CD4-positive, alpha-beta memory T cell (primary cell): ENCODE measurements at regions of chr1 and their contacts with region 1.

Region 1: GRCh38 chr1:109790735-109791494 is 27.2 kb upstream of the EPS8L3 start:
- DNase-seq: peak; percentile 72 to 87 (median 76)
- H3K4me3 ChIP-seq: no peak overlapping the region
- H3K4me3 Mint-ChIP-seq: peak overlapping the region in 7 of 8 donors; percentile 35 to 82 (median 55)
- H3K27ac ChIP-seq: peak overlapping the region; percentile 39
- H3K27ac Mint-ChIP-seq: peak overlapping the region; percentile 82 to 95 (median 92)
- H3K4me1 ChIP-seq: peaks cover 81% of the 10 kb centered on the region
- H3K4me1 Mint-ChIP-seq: peaks cover 43 to 91% (median 73%) of the 10 kb centered on the region in 4 donors
- H3K27me3 ChIP-seq: no peaks in the 10 kb centered on the region
- H3K27me3 Mint-ChIP-seq: no peaks in the 10 kb centered on the region

Region 2: DNA sequence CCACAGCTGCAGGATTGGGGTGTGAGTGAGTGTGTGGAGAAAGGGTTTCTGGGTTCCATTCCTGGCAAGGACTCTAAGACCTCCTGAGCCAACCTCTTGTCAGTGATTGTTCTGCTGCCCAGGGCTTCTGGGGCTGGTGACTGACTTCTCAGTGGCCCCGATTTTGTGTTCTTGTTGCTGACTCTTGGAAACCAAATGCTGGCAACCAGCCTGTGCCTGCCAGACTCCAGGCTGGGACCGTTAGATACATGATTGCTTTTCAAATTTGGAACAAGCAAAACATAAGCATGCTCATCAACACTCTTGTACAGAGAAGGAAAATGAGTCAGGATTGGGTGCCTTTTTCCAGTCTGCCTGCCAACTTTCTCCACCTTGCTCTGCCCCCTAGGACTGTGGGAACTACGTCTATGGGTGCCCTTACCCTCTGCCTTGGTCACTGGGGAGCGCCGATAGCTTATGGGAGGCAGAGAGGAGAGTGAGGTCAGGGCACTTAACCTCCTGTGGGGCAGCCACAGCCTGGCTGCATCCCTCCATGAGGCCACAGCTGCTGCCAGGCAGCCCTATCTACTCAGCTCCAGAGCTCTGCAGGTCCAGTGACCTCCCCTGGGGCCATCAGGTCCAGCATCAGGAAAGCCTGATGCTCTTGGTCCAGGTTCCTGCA is 12.1 kb after region 1 on chr1:
- CTCF ChIA-PET with region 1: interaction called, 136 read pairs
- POLR2A ChIA-PET with region 1: interaction called, 91 read pairs
- intact Hi-C with region 1: loop called (anchors 1 kb)
- DNase-seq: peak in 1 of 5 donors; percentile 48
- H3K4me3 ChIP-seq: peak overlapping the region; percentile 18 to 26
- H3K4me3 Mint-ChIP-seq: peak overlapping the region; percentile 59 to 84 (median 80)
- H3K27ac ChIP-seq: peak overlapping the region; percentile 62
- H3K27ac Mint-ChIP-seq: peak overlapping the region; percentile 89 to 98 (median 93)
- H3K4me1 ChIP-seq: peaks cover 88% of the 10 kb centered on the region
- H3K4me1 Mint-ChIP-seq: peaks cover 53 to 91% (median 73%) of the 10 kb centered on the region in 4 donors
- H3K27me3 ChIP-seq: no peaks in the 10 kb centered on the region
- H3K27me3 Mint-ChIP-seq: no peaks in the 10 kb centered on the region

Region 3: GRCh38 chr1:109814223-109814622 is 23.3 kb after region 1 on chr1:
- CTCF ChIA-PET with region 1: interaction called, 12 read pairs
- POLR2A ChIA-PET with region 1: interaction called, 3 read pairs
- intact Hi-C with region 1: no loop called
- DNase-seq: no peak
- H3K4me3 ChIP-seq: no peak overlapping the region
- H3K4me3 Mint-ChIP-seq: no peak overlapping the region
- H3K27ac ChIP-seq: no peak overlapping the region
- H3K27ac Mint-ChIP-seq: no peak overlapping the region
- H3K4me1 ChIP-seq: no peaks in the 10 kb centered on the region
- H3K4me1 Mint-ChIP-seq: peaks cover 0 to 4% (median 3%) of the 10 kb centered on the region in 4 donors
- H3K27me3 ChIP-seq: no peaks in the 10 kb centered on the region
- H3K27me3 Mint-ChIP-seq: no peaks in the 10 kb centered on the region

Region 4: GRCh38 chr1:109901524-109902145 is 110.7 kb after region 1 on chr1:
- CTCF ChIA-PET with region 1: interaction called, 17 read pairs
- POLR2A ChIA-PET with region 1: interaction called, 48 read pairs
- intact Hi-C with region 1: no loop called
- DNase-seq: no peak
- H3K4me3 ChIP-seq: no peak overlapping the region
- H3K4me3 Mint-ChIP-seq: no peak overlapping the region
- H3K27ac ChIP-seq: no peak overlapping the region
- H3K27ac Mint-ChIP-seq: peak overlapping the region in 1 of 7 donors; percentile 17
- H3K4me1 ChIP-seq: peaks cover 14% of the 10 kb centered on the region
- H3K4me1 Mint-ChIP-seq: peaks cover 12 to 19% (median 14%) of the 10 kb centered on the region in 4 donors
- H3K27me3 ChIP-seq: no peaks in the 10 kb centered on the region
- H3K27me3 Mint-ChIP-seq: no peaks in the 10 kb centered on the region

Region 5: DNA sequence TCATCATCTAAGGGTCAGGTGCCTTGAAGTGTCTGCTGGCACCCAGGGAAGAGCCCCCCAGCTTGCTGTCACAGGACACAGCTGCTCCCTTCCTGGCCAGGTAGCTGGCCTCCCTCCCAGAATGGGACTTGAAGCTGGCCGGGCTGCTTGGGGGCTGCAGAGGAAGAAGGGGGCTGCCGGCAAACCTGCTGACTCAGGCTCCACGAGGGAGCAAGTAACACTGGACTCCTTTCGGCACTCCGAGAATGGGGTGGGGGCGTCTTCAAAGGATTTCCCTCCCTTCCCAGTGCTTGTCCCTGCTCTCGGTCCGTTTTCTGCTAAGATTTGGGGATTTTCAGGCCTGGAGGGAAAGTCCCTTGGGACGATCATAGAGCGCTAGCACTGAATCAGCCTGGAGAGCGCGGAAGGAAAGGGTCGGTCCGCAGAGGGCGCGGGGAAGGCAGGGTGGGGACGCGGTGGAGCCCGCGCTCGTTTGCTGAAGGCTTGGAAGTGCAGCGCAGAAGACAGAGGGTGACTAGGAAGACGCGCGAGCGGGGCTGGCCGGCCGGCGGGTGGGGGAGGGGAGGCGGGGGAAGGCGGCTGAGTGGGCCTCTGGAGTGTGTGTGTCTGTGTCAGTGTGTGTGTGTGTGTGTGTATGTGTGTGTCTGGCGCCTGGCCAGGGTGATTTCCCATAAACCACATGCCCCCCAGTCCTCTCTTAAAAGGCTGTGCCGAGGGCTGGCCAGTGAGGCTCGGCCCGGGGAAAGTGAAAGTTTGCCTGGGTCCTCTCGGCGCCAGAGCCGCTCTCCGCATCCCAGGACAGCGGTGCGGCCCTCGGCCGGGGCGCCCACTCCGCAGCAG is 119.4 kb after region 1 on chr1 and contains the start of gene CSF1:
- CTCF ChIA-PET with region 1: interaction called, 64 read pairs
- POLR2A ChIA-PET with region 1: interaction called, 48 read pairs
- intact Hi-C with region 1: loop called (anchors 2 kb)
- DNase-seq: peak; percentile 51 to 77 (median 58)
- H3K4me3 ChIP-seq: peak within 1 kb of the TSS; percentile 51 to 71
- H3K4me3 Mint-ChIP-seq: peak within 1 kb of the TSS; percentile 91 to 96 (median 94)
- H3K27ac ChIP-seq: peak within 1 kb of the TSS; percentile 57
- H3K27ac Mint-ChIP-seq: peak within 1 kb of the TSS; percentile 92 to 96 (median 94)
- H3K4me1 ChIP-seq: peaks cover 86% of the 10 kb centered on the region
- H3K4me1 Mint-ChIP-seq: peaks cover 54 to 84% (median 72%) of the 10 kb centered on the region in 4 donors
- H3K27me3 ChIP-seq: no peaks in the 10 kb centered on the region
- H3K27me3 Mint-ChIP-seq: peaks cover 0 to 1% of the 10 kb centered on the region in 2 donors
- total RNA-seq, gene CSF1: 10.3 to 13.9 TPM